ENCODE measurements at regions of chr1 and their contacts with region 1.

Region 1: GRCh38 chr1:160251687-160252526 is 10.4 kb downstream of the DCAF8 start:
- DNase-seq: peak; percentile 57
- H3K4me3 ChIP-seq: no peak overlapping the region
- H3K27ac ChIP-seq: no peak overlapping the region
- H3K4me1 ChIP-seq: peaks cover 5% of the 10 kb centered on the region
- H3K27me3 ChIP-seq: no peaks in the 10 kb centered on the region
- CTCF ChIP-seq: peak; percentile 49 to 64
- POLR2A ChIP-seq: no peak

Region 2: GRCh38 chr1:159869173-159869572 is 382.7 kb before region 1 on chr1:
- CTCF ChIA-PET with region 1: no interaction called
- POLR2A ChIA-PET with region 1: no interaction called
- dilution Hi-C with region 1: no loop called
- intact Hi-C with region 1: no loop called
- DNase-seq: no peak
- H3K4me3 ChIP-seq: no peak overlapping the region
- H3K27ac ChIP-seq: no peak overlapping the region
- H3K4me1 ChIP-seq: no peaks in the 10 kb centered on the region
- H3K27me3 ChIP-seq: no peaks in the 10 kb centered on the region
- CTCF ChIP-seq: no peak
- POLR2A ChIP-seq: no peak

Region 3: DNA sequence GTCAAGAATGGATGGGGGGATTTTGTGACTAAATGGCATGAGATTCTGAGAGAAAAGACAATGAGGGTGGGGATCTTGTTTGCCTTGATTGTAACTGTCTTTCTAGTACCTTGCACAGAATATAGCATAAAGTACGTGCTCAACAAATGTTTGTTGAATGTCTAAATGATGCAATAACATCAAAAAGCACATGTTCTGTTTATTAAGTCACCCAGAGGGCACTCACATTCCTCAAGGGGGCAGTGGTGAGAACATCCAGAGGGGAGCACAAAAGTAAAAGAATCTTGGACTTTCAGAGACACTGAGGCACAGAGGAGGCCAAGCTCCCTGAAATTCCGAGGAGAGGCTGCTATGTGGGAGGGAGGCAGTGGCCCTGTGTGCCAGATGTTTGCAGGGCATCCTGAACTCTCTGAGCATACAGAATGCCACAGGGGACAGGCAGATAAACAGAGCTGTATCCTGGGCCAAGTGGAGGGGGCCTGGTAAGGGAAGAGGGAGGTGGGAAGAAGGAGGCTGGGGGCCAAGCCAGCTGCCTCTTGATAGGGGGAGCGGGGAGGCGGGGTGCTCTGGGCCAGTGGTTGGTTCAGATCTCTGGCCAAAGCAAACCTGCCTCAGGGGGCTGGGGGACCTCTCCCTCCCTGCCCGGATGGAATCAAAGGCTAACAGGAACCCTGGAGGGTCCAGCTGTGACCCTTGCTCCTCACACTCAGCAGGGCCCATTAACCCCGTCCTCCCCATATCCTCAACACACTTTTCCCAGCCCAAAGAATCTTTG is 142.8 kb before region 1 on chr1:
- CTCF ChIA-PET with region 1: interaction called, 145 read pairs
- POLR2A ChIA-PET with region 1: no interaction called
- dilution Hi-C with region 1: no loop called
- intact Hi-C with region 1: no loop called
- DNase-seq: peak; percentile 34
- H3K4me3 ChIP-seq: no peak overlapping the region
- H3K27ac ChIP-seq: no peak overlapping the region
- H3K4me1 ChIP-seq: no peaks in the 10 kb centered on the region
- H3K27me3 ChIP-seq: peaks cover 20 to 27% of the 10 kb centered on the region in 2 experiments
- CTCF ChIP-seq: peak; percentile 55 to 58
- POLR2A ChIP-seq: no peak

Region 4: GRCh38 chr1:160205242-160206035 is 46.5 kb before region 1 on chr1 and contains the start of gene PEA15:
- CTCF ChIA-PET with region 1: interaction called, 24 read pairs
- POLR2A ChIA-PET with region 1: no interaction called
- dilution Hi-C with region 1: no loop called
- intact Hi-C with region 1: no loop called
- DNase-seq: peak; percentile 54
- H3K4me3 ChIP-seq: peak within 1 kb of the TSS; percentile 55 to 81 (median 72)
- H3K27ac ChIP-seq: peak within 1 kb of the TSS; percentile 73
- H3K4me1 ChIP-seq: peaks cover 45% of the 10 kb centered on the region
- H3K27me3 ChIP-seq: no peaks in the 10 kb centered on the region
- CTCF ChIP-seq: no peak
- POLR2A ChIP-seq: no peak
- total RNA-seq, gene PEA15: 250 and 270 TPM in 2 replicates

Region 5: GRCh38 chr1:160226623-160227022 is 25.3 kb before region 1 on chr1:
- CTCF ChIA-PET with region 1: interaction called, 61 read pairs
- POLR2A ChIA-PET with region 1: no interaction called
- dilution Hi-C with region 1: no loop called
- intact Hi-C with region 1: no loop called
- DNase-seq: no peak
- H3K4me3 ChIP-seq: no peak overlapping the region
- H3K27ac ChIP-seq: no peak overlapping the region
- H3K4me1 ChIP-seq: no peaks in the 10 kb centered on the region
- H3K27me3 ChIP-seq: no peaks in the 10 kb centered on the region
- CTCF ChIP-seq: no peak
- POLR2A ChIP-seq: no peak

Region 6: DNA sequence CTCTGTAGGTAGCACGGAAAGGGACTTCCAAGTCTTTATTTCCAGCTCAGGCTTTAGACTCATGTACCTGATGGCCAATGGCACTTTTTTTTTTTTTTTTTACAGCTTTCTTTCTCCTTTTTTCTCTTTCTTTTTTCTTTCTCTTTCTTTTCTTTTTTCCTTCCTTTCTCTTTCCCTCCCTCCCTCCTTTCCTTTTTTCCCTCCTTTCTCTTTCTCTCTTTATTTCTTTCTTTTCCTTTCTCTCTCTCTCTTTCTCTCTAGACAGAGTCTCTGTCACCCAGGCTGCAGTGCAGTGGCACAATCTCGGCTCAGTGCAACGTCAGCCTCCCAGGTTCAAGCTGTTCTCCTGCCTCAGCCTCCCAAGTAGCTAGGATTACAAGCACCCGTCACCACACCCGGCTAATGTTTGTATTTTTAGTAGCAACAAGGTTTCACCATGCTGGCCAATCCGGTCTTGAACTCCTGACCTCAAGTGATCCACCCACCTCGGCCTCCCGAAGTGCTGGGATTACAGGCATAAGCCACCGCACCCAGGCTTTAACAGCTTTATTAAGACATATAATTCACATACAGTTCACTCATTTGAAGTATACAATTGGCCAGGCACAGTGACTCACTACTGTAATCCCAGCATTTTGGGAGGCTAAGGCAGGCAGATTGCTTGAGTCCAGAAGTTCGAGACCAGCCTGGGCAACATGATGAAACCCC is 15.5 kb after region 1 on chr1:
- CTCF ChIA-PET with region 1: interaction called, 13 read pairs
- POLR2A ChIA-PET with region 1: no interaction called
- dilution Hi-C with region 1: no loop called
- intact Hi-C with region 1: no loop called
- DNase-seq: no peak
- H3K4me3 ChIP-seq: no peak overlapping the region
- H3K27ac ChIP-seq: no peak overlapping the region
- H3K4me1 ChIP-seq: peaks cover 5% of the 10 kb centered on the region
- H3K27me3 ChIP-seq: peaks cover 0 to 2% of the 10 kb centered on the region in 2 experiments
- CTCF ChIP-seq: no peak
- POLR2A ChIP-seq: no peak